Common myeloid progenitor, CD34-positive (primary cell): ENCODE measurements at regions of chr20 and their contacts with region 1.

Region 1: GRCh38 chr20:47216819-47217410 is 139.6 kb downstream of the ZMYND8 start:
- DNase-seq: no peak
- H3K4me3 ChIP-seq: no peak overlapping the region
- H3K27ac ChIP-seq: no peak overlapping the region
- H3K4me1 ChIP-seq: no peaks in the 10 kb centered on the region
- H3K27me3 ChIP-seq: no peaks in the 10 kb centered on the region

Region 2: GRCh38 chr20:47189060-47189459 is 27.9 kb before region 1 on chr20:
- CTCF ChIA-PET with region 1: no interaction called
- POLR2A ChIA-PET with region 1: no interaction called
- DNase-seq: peak in 1 of 3 donors; percentile 9
- H3K4me3 ChIP-seq: no peak overlapping the region
- H3K27ac ChIP-seq: no peak overlapping the region
- H3K4me1 ChIP-seq: peaks cover 0 to 3% (median 0%) of the 10 kb centered on the region in 4 experiments
- H3K27me3 ChIP-seq: peaks cover 0 to 17% (median 3%) of the 10 kb centered on the region in 5 experiments

Region 3: DNA sequence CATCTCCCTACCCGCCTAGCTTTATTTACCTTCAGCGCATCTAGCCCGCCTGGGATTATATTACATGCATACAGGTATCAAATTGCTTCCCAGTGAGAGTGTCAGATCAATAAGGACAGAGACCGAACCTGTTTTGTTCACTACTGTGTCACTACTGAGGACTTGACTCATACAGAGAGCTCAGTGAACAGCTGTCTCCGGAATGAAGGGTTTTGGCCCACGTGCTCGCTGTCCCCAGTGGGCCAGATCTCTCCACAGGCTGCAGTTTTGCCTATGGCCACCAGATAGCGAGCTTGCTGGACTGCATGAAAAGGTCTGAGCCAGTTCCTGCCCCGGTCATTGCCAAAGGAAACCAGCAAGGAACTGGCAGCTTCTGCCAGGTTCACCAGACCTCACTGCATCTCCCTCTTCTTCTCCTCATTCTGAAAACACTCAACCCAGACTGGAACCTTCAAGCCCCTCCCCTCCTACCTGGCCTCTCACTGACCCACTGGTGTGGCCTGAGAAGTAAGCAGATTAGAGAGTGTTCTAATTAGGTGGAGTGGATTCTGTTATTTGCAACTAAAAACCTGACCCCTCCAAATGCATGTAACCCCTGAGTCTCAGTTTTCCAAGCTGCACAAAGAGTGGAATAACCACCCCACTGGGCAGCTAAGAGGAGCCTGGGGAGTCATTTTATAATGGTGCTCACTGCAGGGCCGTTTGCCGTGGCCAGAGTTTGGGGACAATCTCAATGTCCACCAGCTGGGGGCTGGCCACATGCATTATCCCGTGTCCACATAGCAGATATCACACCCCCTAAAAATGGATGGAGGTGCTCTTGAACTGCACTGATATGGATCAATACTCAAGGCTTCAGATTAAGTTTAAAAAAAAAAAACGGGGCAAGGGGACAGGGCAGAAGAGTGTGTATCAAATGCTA is 11.1 kb before region 1 on chr20:
- CTCF ChIA-PET with region 1: interaction called, 22 read pairs
- POLR2A ChIA-PET with region 1: interaction called, 5 read pairs
- DNase-seq: peak; percentile 26 to 47 (median 36)
- H3K4me3 ChIP-seq: no peak overlapping the region
- H3K27ac ChIP-seq: no peak overlapping the region
- H3K4me1 ChIP-seq: no peaks in the 10 kb centered on the region
- H3K27me3 ChIP-seq: no peaks in the 10 kb centered on the region